Right ventricle myocardium inferior (tissue), 1 donor: ENCODE measurements at regions of chr1 and their contacts with region 1.

Region 1: GRCh38 chr1:65174585-65174984 is 26.6 kb downstream of the AK4 start:
- DNase-seq: peak; percentile 71
- ATAC-seq: peak; percentile 62

Region 2: GRCh38 chr1:64956733-64957441 is 217.7 kb before region 1 on chr1:
- intact Hi-C with region 1: loop called (anchors 10 kb)
- DNase-seq: no peak
- ATAC-seq: peak; percentile 51

Region 3: DNA sequence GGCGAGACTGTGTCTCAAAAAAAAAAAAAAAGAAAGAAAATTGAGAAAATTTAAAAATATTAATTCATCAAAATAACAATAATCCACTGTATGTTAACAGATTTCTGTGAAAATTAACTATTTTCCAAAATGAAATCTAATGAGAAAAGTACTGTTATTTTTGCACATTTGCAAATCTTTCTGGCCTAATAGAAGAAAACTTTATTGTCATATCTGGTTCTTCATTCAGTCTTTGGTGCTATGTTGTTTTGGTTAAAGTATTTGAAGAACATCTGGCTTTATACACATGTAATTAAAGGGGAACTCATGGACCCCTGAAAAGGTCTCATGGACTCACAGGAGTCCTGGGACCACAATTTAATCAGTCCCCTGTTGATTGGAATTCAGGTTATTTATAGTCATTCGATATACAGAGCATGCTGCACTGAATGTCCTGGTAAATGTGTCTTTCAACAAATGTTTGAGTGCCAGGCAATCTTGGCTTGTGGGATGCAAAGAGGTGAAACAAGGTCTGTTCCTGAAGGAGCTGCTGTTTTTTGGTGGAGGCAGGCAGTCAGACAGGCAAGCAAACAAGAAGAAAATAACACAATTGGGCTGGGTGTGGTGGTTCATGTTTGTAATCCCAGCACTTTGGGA is 17.6 kb before region 1 on chr1:
- intact Hi-C with region 1: loop called (anchors 1 kb)
- DNase-seq: no peak
- ATAC-seq: peak; percentile 74